Adrenal gland (tissue), 19 donors: ENCODE measurements at regions of chr17 and their contacts with region 1.

Region 1: GRCh38 chr17:43832976-43833829 is at the start of gene MPP3:
- DNase-seq: peak in 6 of 7 donors; percentile 45 to 71 (median 60)
- H3K4me3 ChIP-seq: peak within 1 kb of the TSS in 2 of 4 donors; percentile 49 to 75
- H3K27ac ChIP-seq: peak within 1 kb of the TSS in 1 of 5 donors; percentile 59
- H3K4me1 ChIP-seq: peaks cover 13% of the 10 kb centered on the region in 2 donors
- H3K27me3 ChIP-seq: peaks cover 6% of the 10 kb centered on the region
- CTCF ChIP-seq: no peak
- POLR2A ChIP-seq: peak in 1 of 2 donors; percentile 45
- total RNA-seq, gene MPP3: 0.60 to 10.6 (median 3.4) TPM

Region 2: DNA sequence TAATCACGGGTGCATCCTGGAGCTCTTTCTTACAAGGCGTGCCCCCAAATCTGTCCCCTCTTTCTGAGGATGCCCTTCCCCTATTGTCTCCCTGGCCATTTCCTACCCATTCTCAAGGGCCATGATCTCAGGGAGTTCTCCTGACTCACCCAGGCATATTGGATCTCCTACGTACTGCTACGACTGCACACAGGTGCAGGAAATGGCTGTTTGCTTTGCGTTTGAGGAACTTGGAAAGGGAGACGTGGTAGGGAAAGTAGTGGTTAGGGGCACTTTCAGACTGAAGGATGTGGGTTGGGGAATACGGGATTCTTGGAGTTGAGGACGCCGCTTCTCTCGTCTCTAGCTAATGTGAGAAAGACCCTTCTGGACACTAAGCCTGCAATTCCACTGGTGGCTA is 152.7 kb before region 1 on chr17:
- intact Hi-C with region 1: no loop called
- DNase-seq: peak in 1 of 7 donors; percentile 27
- H3K4me3 ChIP-seq: no peak overlapping the region
- H3K27ac ChIP-seq: peak overlapping the region in 3 of 5 donors; percentile 65 to 83 (median 81)
- H3K4me1 ChIP-seq: peaks cover 19 to 34% of the 10 kb centered on the region in 2 donors
- H3K27me3 ChIP-seq: no peaks in the 10 kb centered on the region
- CTCF ChIP-seq: no peak
- POLR2A ChIP-seq: no peak

Region 3: GRCh38 chr17:43779145-43780125 is 53.8 kb before region 1 on chr17:
- intact Hi-C with region 1: loop called in 1 of 2 experiments (anchors 10 kb)
- DNase-seq: peak in 4 of 7 donors; percentile 39 to 73 (median 54)
- H3K4me3 ChIP-seq: peak overlapping the region; percentile 22 to 81 (median 62)
- H3K27ac ChIP-seq: peak overlapping the region in 4 of 5 donors; percentile 98 to 100 (median 100)
- H3K4me1 ChIP-seq: peaks cover 12 to 30% of the 10 kb centered on the region in 2 donors
- H3K27me3 ChIP-seq: no peaks in the 10 kb centered on the region
- CTCF ChIP-seq: peak in 2 of 6 experiments; percentile 7 to 12
- POLR2A ChIP-seq: no peak